ENCODE measurements at regions of chr20 and their contacts with region 1.

Region 1: DNA sequence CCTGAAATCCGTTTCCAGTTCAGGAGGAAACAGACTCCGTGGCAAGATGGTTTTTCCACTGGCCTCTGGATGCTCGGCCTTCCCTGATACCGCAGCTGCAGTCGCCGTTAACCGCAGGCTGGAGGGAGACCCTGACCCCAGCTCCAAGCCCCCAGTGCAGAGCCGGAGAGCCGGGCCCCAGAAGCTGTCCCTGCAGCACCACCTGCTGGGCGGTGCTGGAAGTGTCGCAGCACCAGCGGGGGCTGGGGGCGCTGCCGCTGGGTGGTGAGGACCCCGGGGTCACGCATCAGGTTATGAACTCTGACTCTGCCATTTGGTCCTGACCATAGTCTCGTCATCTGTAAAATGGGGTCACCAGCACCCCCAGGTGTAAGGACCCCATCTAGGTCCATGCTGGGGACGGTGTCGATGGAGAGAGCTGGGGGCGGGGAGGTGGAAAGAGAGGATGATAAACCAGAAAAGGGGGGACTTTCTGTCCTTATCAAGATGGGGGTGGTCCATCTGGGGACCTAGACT is 20.7 kb upstream of the CHRNA4 start:
- DNase-seq: peak; percentile 18
- H3K4me3 ChIP-seq: no peak overlapping the region
- H3K27ac ChIP-seq: no peak overlapping the region
- H3K4me1 ChIP-seq: no peaks in the 10 kb centered on the region
- H3K27me3 ChIP-seq: peaks cover 0 to 3% of the 10 kb centered on the region in 2 experiments
- CTCF ChIP-seq: peak; percentile 94 to 98
- POLR2A ChIP-seq: no peak

Region 2: GRCh38 chr20:63056236-63056948 is 325.5 kb before region 1 on chr20:
- CTCF ChIA-PET with region 1: interaction called, 11 read pairs
- POLR2A ChIA-PET with region 1: no interaction called
- dilution Hi-C with region 1: no loop called
- intact Hi-C with region 1: no loop called
- DNase-seq: peak; percentile 7
- H3K4me3 ChIP-seq: no peak overlapping the region
- H3K27ac ChIP-seq: no peak overlapping the region
- H3K4me1 ChIP-seq: no peaks in the 10 kb centered on the region
- H3K27me3 ChIP-seq: peaks cover 2 to 4% of the 10 kb centered on the region in 2 experiments
- CTCF ChIP-seq: peak; percentile 66 to 80
- POLR2A ChIP-seq: no peak

Region 3: GRCh38 chr20:63309261-63310071 is 72.4 kb before region 1 on chr20:
- CTCF ChIA-PET with region 1: interaction called, 267 read pairs
- POLR2A ChIA-PET with region 1: no interaction called
- dilution Hi-C with region 1: no loop called
- intact Hi-C with region 1: loop called (anchors 1 kb)
- DNase-seq: peak; percentile 19
- H3K4me3 ChIP-seq: no peak overlapping the region
- H3K27ac ChIP-seq: no peak overlapping the region
- H3K4me1 ChIP-seq: no peaks in the 10 kb centered on the region
- H3K27me3 ChIP-seq: no peaks in the 10 kb centered on the region
- CTCF ChIP-seq: peak; percentile 69 to 93
- POLR2A ChIP-seq: no peak

Region 4: GRCh38 chr20:63317601-63318291 is 64.1 kb before region 1 on chr20:
- CTCF ChIA-PET with region 1: interaction called, 11 read pairs
- POLR2A ChIA-PET with region 1: no interaction called
- dilution Hi-C with region 1: no loop called
- intact Hi-C with region 1: no loop called
- DNase-seq: no peak
- H3K4me3 ChIP-seq: no peak overlapping the region
- H3K27ac ChIP-seq: no peak overlapping the region
- H3K4me1 ChIP-seq: no peaks in the 10 kb centered on the region
- H3K27me3 ChIP-seq: no peaks in the 10 kb centered on the region
- CTCF ChIP-seq: no peak
- POLR2A ChIP-seq: no peak

Region 5: DNA sequence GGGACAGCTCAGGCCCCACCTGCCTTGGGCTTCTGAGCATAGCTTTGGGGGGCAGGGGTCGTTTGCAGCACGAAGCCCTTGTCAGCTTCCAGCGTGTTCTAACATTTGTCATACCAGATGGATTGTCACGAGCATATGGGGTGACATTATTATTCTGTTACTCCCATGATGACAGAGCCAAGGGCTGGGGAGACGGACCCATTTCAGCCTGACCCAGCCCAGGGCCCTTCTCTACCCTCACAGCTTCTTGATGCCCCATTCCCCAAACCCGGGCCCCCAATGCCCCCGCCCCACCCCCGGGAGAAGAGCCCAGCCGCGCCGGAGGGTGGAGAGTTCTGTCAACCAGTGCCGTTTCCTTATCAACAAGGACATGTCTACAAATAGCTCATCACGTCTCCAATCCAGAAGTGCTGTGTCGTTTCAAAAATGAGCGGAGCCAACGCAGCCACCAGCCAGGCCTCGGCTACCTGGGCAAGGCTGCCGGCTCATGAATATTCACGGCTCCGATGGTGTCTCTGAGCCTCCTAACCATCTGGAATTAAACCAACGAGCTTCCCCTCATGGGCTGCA is 11.2 kb before region 1 on chr20:
- CTCF ChIA-PET with region 1: interaction called, 12 read pairs
- POLR2A ChIA-PET with region 1: no interaction called
- dilution Hi-C with region 1: no loop called
- intact Hi-C with region 1: no loop called
- DNase-seq: no peak
- H3K4me3 ChIP-seq: no peak overlapping the region
- H3K27ac ChIP-seq: no peak overlapping the region
- H3K4me1 ChIP-seq: no peaks in the 10 kb centered on the region
- H3K27me3 ChIP-seq: no peaks in the 10 kb centered on the region
- CTCF ChIP-seq: no peak
- POLR2A ChIP-seq: no peak

Region 6: GRCh38 chr20:63417738-63418120 is 35.9 kb after region 1 on chr20:
- CTCF ChIA-PET with region 1: no interaction called
- POLR2A ChIA-PET with region 1: no interaction called
- dilution Hi-C with region 1: no loop called
- intact Hi-C with region 1: no loop called
- DNase-seq: no peak
- H3K4me3 ChIP-seq: no peak overlapping the region
- H3K27ac ChIP-seq: no peak overlapping the region
- H3K4me1 ChIP-seq: no peaks in the 10 kb centered on the region
- H3K27me3 ChIP-seq: no peaks in the 10 kb centered on the region
- CTCF ChIP-seq: no peak
- POLR2A ChIP-seq: no peak

Region 7: DNA sequence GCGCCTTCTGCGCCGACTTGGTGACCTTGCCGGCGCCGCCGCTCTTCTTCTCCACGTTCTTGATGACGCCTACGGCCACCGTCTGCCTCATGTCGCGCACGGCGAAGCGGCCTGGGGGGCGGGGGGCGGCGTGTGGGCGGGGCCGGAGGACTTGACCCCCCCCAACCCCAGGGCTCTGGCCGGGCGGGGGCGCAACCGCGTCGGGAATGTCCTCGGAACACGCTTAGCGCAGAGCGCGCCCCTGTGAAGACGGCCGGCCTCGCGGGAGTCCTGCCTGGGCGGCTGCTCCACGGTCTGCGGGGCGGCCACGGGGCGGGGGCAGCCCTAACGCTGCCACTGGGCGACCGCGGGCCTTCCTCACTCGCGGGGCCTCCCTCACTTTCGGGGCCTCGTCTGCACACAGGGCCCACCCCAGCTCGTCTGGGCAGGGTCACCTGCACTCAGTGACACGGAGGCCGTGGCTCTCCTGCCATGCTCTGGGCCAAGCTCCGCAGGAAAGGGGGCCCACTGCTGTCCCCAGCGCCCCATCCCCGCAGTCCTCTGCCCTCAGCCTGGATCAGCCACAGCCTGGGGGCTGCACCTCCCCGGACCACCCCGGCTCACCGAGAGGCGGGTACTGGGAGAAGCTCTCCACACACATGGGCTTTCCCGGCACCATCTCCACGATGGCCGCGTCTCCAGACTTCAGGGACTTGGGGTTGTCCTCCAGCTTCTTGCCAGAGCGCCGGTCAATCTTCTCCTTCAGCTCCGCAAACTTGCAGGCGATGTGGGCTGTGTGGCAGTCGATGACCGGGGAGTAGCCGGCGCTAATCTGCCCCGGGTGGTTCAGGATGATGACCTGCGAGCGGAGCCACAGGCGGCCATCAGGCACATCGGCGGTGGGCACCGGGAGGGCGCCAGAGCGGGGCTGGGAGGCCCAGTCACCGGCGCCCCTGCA is 106.7 kb after region 1 on chr20:
- CTCF ChIA-PET with region 1: no interaction called
- POLR2A ChIA-PET with region 1: no interaction called
- dilution Hi-C with region 1: no loop called
- intact Hi-C with region 1: no loop called
- DNase-seq: no peak
- H3K4me3 ChIP-seq: no peak overlapping the region
- H3K27ac ChIP-seq: no peak overlapping the region
- H3K4me1 ChIP-seq: no peaks in the 10 kb centered on the region
- H3K27me3 ChIP-seq: no peaks in the 10 kb centered on the region
- CTCF ChIP-seq: no peak
- POLR2A ChIP-seq: no peak

Measured in endothelial cell of umbilical vein (primary cell).